ENCODE measurements at regions of chr2 and their contacts with region 1.

Region 1: DNA sequence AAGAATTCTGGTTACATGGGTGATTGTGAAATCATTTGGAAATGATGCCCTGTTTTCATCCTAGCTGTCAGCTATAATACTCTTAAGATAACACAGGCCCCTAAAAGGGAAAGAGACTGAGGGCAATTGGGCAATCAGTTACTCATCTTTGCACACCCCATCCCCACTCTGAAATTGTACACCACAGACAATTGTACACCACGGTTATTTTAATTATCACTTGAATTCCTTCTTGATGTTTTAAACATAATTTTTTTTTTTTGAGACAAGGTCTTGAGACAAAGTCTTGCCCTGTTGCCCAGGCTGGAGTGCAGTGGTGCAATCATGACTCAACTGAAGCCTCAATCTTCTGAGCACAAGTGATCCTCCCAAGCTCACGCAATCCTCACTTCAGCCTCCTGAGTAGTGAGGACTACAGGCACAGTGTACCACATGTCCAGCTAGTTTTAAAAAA is 862.4 kb upstream of the ACVR2A start:
- DNase-seq: peak; percentile 75
- H3K4me3 ChIP-seq: no peak overlapping the region
- CTCF ChIP-seq: no peak

Region 2: GRCh38 chr2:146821836-146822316 is 160.5 kb before region 1 on chr2:
- in situ Hi-C with region 1: no loop called
- DNase-seq: peak; percentile 61
- H3K4me3 ChIP-seq: no peak overlapping the region
- CTCF ChIP-seq: peak; percentile 37

Region 3: GRCh38 chr2:147030966-147031720 is 48.7 kb after region 1 on chr2:
- in situ Hi-C with region 1: loop called (anchors 10 kb)
- DNase-seq: peak; percentile 54
- H3K4me3 ChIP-seq: no peak overlapping the region
- CTCF ChIP-seq: no peak